ENCODE measurements at regions of chr19 and their contacts with region 1.

Region 1: GRCh38 chr19:21835810-21836444 is at the start of gene ZNF43:
- DNase-seq: peak; percentile 84
- ATAC-seq: peak; percentile 99
- H3K4me3 Mint-ChIP-seq: peak within 1 kb of the TSS; percentile 98
- H3K27ac Mint-ChIP-seq: peak within 1 kb of the TSS; percentile 100
- H3K4me1 Mint-ChIP-seq: peaks cover 10% of the 10 kb centered on the region
- H3K27me3 Mint-ChIP-seq: no peaks in the 10 kb centered on the region
- total RNA-seq, gene ZNF43: 36.5 to 39.8 TPM

Region 2: GRCh38 chr19:21328885-21329605 is 506.9 kb before region 1 on chr19 and contains the start of gene ZNF708:
- POLR2A ChIA-PET with region 1: interaction called, 10 read pairs
- DNase-seq: peak; percentile 77
- ATAC-seq: peak; percentile 100
- H3K4me3 Mint-ChIP-seq: peak within 1 kb of the TSS; percentile 99
- H3K27ac Mint-ChIP-seq: peak within 1 kb of the TSS; percentile 99
- H3K4me1 Mint-ChIP-seq: peaks cover 17% of the 10 kb centered on the region
- H3K27me3 Mint-ChIP-seq: no peaks in the 10 kb centered on the region
- total RNA-seq, gene ZNF708: 28.5 to 30.7 TPM

Region 3: DNA sequence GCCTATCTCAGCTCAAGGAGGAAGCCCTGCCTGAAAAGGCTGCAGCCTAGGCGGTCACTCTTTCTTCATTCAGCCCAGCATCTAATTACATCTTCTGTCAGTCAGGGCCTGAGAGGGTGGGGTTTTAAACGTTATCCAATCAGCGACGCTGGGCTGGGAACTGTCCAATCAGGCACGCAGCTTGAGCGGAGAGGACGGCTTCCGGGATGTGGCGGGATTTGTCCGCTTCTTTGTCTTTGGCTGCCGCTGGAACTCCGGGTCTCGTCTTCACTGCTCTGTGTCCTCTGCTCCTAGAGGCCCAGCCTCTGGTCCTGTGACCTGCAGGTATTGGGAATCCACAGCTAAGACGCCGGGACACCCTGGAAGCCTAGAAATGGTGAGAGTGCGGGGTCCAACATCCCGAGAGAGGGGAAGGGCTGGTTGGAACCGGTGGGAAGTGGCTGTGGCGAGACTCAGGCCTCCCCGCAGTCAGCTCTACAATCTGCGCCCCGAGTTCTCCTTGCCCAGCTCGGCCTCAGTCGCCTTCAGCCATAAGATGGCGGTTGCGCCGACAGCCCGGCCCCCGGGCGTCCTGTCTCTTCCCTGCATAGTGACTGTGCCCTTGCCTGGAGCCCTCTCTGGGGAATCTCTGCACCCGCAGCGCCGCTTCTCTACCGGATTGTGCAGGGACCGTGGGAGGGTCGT is 477.0 kb before region 1 on chr19 and contains the start of gene ZNF738:
- POLR2A ChIA-PET with region 1: interaction called, 10 read pairs
- DNase-seq: peak; percentile 80
- ATAC-seq: peak; percentile 97
- H3K4me3 Mint-ChIP-seq: peak within 1 kb of the TSS; percentile 99
- H3K27ac Mint-ChIP-seq: peak within 1 kb of the TSS; percentile 98
- H3K4me1 Mint-ChIP-seq: peaks cover 7% of the 10 kb centered on the region
- H3K27me3 Mint-ChIP-seq: no peaks in the 10 kb centered on the region
- total RNA-seq, gene ZNF738: 13.9 to 16.4 TPM

Region 4: DNA sequence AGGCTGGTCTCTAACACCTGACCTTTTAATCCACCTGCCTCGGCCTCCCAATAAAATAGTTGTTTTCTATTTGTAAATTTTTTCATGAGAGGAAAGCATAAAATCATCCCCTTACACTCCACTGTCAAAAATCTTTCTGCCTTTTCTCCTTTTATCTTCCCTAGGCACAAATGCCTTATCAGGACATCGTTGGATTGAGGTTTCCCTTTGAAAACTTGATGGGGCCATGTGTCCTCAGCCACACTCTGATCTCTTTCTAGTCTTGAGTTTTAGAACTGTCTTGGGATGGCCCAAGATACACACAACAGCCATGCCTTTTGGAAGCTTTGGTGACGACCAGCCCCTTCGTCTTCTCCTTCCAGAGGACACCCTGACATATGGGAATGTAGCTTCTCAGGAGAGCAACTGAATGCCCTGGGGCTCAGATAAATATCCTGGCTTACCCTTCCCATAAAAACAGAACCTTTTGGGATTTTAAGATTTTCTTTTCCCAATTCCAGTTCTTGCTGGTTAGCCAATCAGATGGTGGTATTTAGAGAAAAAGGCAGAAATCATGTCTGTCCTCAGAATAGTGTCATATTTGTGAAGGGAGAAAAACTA is 218.1 kb before region 1 on chr19:
- POLR2A ChIA-PET with region 1: no interaction called
- DNase-seq: no peak
- ATAC-seq: no peak
- H3K4me3 Mint-ChIP-seq: no peak overlapping the region
- H3K27ac Mint-ChIP-seq: no peak overlapping the region
- H3K4me1 Mint-ChIP-seq: no peaks in the 10 kb centered on the region
- H3K27me3 Mint-ChIP-seq: no peaks in the 10 kb centered on the region

Region 5: DNA sequence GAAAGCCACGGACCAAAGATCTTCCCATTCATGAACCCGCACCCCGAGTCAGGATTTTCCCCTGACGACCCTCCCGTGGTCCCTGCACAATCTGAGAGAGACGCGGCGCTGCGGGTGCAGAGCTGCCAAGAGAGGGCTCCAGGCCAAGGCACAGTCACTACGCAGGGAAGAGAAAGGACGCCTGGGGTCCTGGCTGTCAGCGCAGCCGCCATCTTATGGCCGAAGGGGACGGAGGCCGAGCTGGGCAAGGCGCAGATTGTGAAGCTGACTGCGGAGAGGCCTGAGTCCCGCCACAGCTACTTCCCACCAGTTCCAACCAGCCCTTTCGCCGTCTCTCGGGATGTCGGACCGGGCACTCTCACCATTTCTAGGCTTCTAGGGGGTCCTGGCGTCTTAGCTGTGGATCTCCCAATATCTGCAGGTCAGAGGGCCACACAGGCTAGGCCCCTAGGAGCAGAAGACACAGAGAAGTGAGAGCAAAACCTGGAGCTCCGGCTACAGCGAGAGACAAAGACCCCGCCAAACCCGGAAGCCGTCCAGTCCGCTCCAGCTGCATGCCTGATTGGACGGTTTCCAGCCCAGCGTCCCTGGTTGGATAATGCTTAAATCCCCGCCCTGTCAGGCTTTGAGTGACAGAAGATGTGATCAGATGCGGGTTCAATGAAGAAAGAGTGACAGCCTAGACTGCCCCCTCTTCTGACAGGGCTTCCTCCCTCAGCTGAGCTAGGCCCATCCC is 68.7 kb before region 1 on chr19 and contains the start of gene ZNF100:
- POLR2A ChIA-PET with region 1: interaction called, 29 read pairs
- DNase-seq: peak; percentile 81
- ATAC-seq: peak; percentile 97
- H3K4me3 Mint-ChIP-seq: peak within 1 kb of the TSS; percentile 98
- H3K27ac Mint-ChIP-seq: peak within 1 kb of the TSS; percentile 96
- H3K4me1 Mint-ChIP-seq: peaks cover 15% of the 10 kb centered on the region
- H3K27me3 Mint-ChIP-seq: no peaks in the 10 kb centered on the region
- total RNA-seq, gene ZNF100: 17.7 to 21.9 TPM

Region 6: DNA sequence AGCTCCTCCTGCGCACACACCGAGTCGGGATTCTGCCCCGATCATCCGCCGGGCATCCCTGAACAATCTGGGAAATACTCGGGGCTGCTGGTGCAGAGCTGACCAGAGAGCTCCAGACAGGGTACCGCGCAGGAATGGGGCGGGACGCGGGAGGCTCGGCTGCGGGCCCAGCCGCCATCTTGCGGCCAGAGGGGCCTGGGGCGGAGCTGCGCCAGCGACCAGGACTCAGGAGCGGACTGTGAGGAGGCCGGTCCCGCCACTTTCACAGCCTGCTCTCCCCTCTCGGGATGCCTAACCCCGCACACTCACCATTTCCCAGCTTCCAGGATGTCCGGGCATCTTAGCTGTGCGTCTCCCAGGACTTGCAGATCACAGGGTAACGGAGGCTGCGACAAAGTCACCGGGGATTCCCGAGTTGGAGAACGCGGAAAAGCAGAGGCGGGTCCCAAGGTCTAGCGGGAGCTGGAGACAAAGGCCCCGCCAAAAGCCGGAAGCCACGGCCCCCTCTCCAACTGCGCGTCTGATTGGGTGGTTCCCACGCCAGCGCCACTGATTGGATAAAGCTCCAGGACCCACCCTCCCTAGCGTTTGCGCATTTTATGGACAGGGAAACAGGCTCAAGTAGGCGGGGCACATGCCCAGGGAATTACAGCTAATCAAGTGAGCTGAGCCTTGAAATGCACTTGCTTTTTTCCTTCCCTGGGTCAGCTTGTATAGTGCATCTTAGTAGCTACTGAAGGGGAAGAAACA is 15.8 kb after region 1 on chr19:
- POLR2A ChIA-PET with region 1: interaction called, 76 read pairs
- DNase-seq: peak; percentile 84
- ATAC-seq: peak; percentile 98
- H3K4me3 Mint-ChIP-seq: peak overlapping the region; percentile 92
- H3K27ac Mint-ChIP-seq: peak overlapping the region; percentile 89
- H3K4me1 Mint-ChIP-seq: peaks cover 18% of the 10 kb centered on the region
- H3K27me3 Mint-ChIP-seq: no peaks in the 10 kb centered on the region

Region 7: DNA sequence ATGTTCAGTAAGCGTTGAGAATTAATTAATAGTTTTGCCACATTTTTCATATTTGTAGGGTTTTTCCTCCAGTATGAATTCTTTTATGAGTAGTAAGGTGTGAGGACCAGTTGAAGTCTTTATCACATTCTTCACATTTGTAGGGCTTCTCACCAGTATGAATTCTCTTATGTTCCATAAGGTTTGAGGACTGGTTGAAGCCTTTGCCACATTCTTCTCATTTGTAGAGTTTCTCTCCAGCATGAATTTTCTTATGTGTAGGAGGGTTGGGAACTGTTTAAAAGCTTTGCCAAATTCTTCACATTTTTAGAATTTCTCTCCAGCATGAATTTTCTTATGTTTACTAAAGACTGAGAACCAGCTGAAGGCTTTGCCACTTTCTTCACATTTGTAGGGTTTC is 134.5 kb after region 1 on chr19:
- POLR2A ChIA-PET with region 1: no interaction called
- DNase-seq: no peak
- ATAC-seq: no peak
- H3K4me3 Mint-ChIP-seq: no peak overlapping the region
- H3K27ac Mint-ChIP-seq: no peak overlapping the region
- H3K4me1 Mint-ChIP-seq: no peaks in the 10 kb centered on the region
- H3K27me3 Mint-ChIP-seq: no peaks in the 10 kb centered on the region